ENCODE measurements at regions of chr3 and their contacts with region 1.

Region 1: GRCh38 chr3:169668957-169669681 is 5.6 kb upstream of the MECOM start:
- DNase-seq: peak; percentile 90
- ATAC-seq: peak; percentile 91 to 95
- H3K4me3 ChIP-seq: peak overlapping the region; percentile 53
- H3K27ac ChIP-seq: peak overlapping the region; percentile 73
- H3K4me1 ChIP-seq: peaks cover 16% of the 10 kb centered on the region
- H3K27me3 ChIP-seq: peaks cover 55% of the 10 kb centered on the region
- CTCF ChIP-seq: peak; percentile 76

Region 2: GRCh38 chr3:169133178-169134161 is 535.6 kb before region 1 on chr3:
- intact Hi-C with region 1: loop called (anchors 10 kb)
- DNase-seq: no peak
- ATAC-seq: peak in 1 of 2 donors; percentile 71
- H3K4me3 ChIP-seq: no peak overlapping the region
- H3K27ac ChIP-seq: no peak overlapping the region
- H3K4me1 ChIP-seq: peaks cover 7% of the 10 kb centered on the region
- H3K27me3 ChIP-seq: no peaks in the 10 kb centered on the region
- CTCF ChIP-seq: peak; percentile 41